ENCODE measurements at regions of chr5 and their contacts with region 1.

Region 1: GRCh38 chr5:122192497-122193496 is 63.5 kb downstream of the ZNF474 start:
- DNase-seq: peak; percentile 38
- ATAC-seq: peak; percentile 83
- H3K4me3 ChIP-seq: no peak overlapping the region
- H3K27ac ChIP-seq: no peak overlapping the region
- H3K4me1 ChIP-seq: no peaks in the 10 kb centered on the region
- H3K27me3 ChIP-seq: no peaks in the 10 kb centered on the region
- CTCF ChIP-seq: peak; percentile 68

Region 2: DNA sequence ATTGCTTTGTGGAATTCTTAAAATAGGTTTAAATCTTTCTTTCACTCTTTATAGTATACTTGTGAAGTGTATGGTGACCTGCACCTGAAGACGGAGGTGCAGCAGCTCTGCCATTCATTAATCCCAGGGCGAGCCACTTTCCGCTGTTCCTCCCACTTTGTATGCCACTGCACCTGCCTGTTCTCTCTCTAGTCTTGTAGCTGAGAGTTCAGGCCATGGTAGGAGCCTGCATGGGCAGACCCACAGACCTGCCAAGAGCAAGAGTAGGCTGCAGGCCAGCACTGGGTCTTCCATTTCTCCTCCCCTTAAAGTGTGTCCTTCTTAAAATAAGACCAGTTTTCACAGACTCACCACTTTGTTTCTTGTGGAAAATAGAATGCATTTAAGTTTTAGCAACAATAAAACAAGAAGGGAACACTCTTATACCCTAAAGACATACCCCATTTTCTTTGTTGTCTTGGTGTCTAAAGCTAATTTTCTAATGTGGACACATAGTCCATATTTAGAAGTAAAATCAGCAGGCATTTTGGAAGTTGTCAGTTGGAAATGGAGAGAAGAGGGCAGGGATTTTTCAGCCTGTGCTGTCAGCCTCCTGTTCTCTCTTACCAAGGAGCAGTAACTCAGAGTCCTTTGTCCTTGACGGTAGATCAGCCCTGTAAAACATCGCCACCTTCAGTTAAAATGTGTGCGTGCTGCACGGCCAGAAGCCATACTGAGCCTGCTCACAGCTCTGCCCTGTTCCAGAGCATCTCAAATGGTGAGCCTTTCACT is 222.4 kb after region 1 on chr5:
- CTCF ChIA-PET with region 1: no interaction called
- POLR2A ChIA-PET with region 1: no interaction called
- in situ Hi-C with region 1: no loop called
- intact Hi-C with region 1: loop called (anchors 1 kb)
- DNase-seq: peak; percentile 24
- ATAC-seq: peak; percentile 94
- H3K4me3 ChIP-seq: no peak overlapping the region
- H3K27ac ChIP-seq: no peak overlapping the region
- H3K4me1 ChIP-seq: no peaks in the 10 kb centered on the region
- H3K27me3 ChIP-seq: 0 out of 2 replicates have a peak, but pooled peaks cover 4% of the 10 kb centered on the region
- CTCF ChIP-seq: peak; percentile 73

Region 3: GRCh38 chr5:122492664-122493063 is 299.9 kb after region 1 on chr5:
- CTCF ChIA-PET with region 1: interaction called, 4 read pairs
- POLR2A ChIA-PET with region 1: no interaction called
- in situ Hi-C with region 1: no loop called
- intact Hi-C with region 1: loop called (anchors 5 kb)
- DNase-seq: no peak
- ATAC-seq: peak; percentile 62; the same call in 1 of the 2 replicates
- H3K4me3 ChIP-seq: no peak overlapping the region
- H3K27ac ChIP-seq: no peak overlapping the region
- H3K4me1 ChIP-seq: no peaks in the 10 kb centered on the region
- H3K27me3 ChIP-seq: no peaks in the 10 kb centered on the region
- CTCF ChIP-seq: peak; percentile 29